ENCODE measurements at regions of chr22 and their contacts with region 1.

Region 1: GRCh38 chr22:23913661-23914353 is 19.6 kb downstream of the MIF start:
- DNase-seq: peak; percentile 98
- ATAC-seq: peak; percentile 98
- H3K4me3 ChIP-seq: peak overlapping the region; percentile 58 to 77 (median 61)
- H3K27ac ChIP-seq: peak overlapping the region; percentile 90
- H3K4me1 ChIP-seq: peaks cover 36% of the 10 kb centered on the region
- H3K27me3 ChIP-seq: no peaks in the 10 kb centered on the region; a peak in 1 of 5 replicates
- CTCF ChIP-seq: no peak; the same call in 1 of the 2 replicates
- EP300 ChIP-seq: no peak; a peak in 1 of 4 replicates
- POLR2A ChIP-seq: peak; percentile 83 to 96
- RAD21 ChIP-seq: no peak

Region 2: GRCh38 chr22:23857606-23858483 is 56.0 kb before region 1 on chr22 and contains the start of gene SLC2A11:
- CTCF ChIA-PET with region 1: no interaction called
- POLR2A ChIA-PET with region 1: interaction called, 20 read pairs
- in situ Hi-C with region 1: no loop called
- intact Hi-C with region 1: no loop called
- DNase-seq: peak; percentile 96
- ATAC-seq: peak; percentile 93
- H3K4me3 ChIP-seq: peak within 1 kb of the TSS; percentile 65 to 89 (median 75)
- H3K27ac ChIP-seq: peak within 1 kb of the TSS; percentile 81
- H3K4me1 ChIP-seq: peaks cover 25% of the 10 kb centered on the region
- H3K27me3 ChIP-seq: no peaks in the 10 kb centered on the region; a peak in 1 of 5 replicates
- CTCF ChIP-seq: peak; percentile 19
- EP300 ChIP-seq: no peak
- POLR2A ChIP-seq: peak; percentile 47 to 93; a peak in 3 of 4 replicates
- RAD21 ChIP-seq: no peak
- total RNA-seq, gene SLC2A11: 8.9 and 15.2 TPM in 2 replicates

Region 3: DNA sequence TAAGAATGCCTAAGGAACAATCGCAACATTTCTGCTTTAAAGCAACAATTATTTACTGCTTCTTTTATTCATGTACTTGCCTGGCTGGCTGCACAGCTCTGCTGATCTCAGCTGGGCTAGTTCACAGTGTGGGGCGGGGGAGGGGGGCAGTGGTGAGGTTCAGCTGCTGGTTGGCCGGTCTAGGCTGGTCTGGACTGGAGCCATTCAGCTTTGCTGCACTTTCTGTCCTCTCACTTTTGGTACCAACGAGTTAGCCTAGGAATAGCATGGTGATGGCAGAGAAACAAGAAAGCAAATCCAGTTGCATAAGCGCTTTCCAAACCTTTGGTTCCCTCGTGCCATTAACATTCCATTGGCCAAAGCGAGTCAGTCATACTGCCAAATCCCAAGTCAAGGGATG is 35.6 kb before region 1 on chr22:
- CTCF ChIA-PET with region 1: no interaction called
- POLR2A ChIA-PET with region 1: no interaction called
- in situ Hi-C with region 1: no loop called
- intact Hi-C with region 1: no loop called
- DNase-seq: no peak
- ATAC-seq: no peak
- H3K4me3 ChIP-seq: no peak overlapping the region
- H3K27ac ChIP-seq: no peak overlapping the region
- H3K4me1 ChIP-seq: peaks cover 7% of the 10 kb centered on the region; the same call in 1 of the 2 replicates
- H3K27me3 ChIP-seq: no peaks in the 10 kb centered on the region
- CTCF ChIP-seq: no peak
- EP300 ChIP-seq: no peak
- POLR2A ChIP-seq: no peak
- RAD21 ChIP-seq: no peak

Region 4: GRCh38 chr22:23888615-23889401 is 25.0 kb before region 1 on chr22:
- CTCF ChIA-PET with region 1: no interaction called
- POLR2A ChIA-PET with region 1: interaction called, 84 read pairs
- in situ Hi-C with region 1: no loop called
- intact Hi-C with region 1: no loop called
- DNase-seq: peak; percentile 52
- ATAC-seq: peak; percentile 48
- H3K4me3 ChIP-seq: no peak overlapping the region
- H3K27ac ChIP-seq: peak overlapping the region; percentile 78
- H3K4me1 ChIP-seq: peaks cover 49% of the 10 kb centered on the region
- H3K27me3 ChIP-seq: no peaks in the 10 kb centered on the region; a peak in 1 of 5 replicates
- CTCF ChIP-seq: peak; percentile 59
- EP300 ChIP-seq: no peak
- POLR2A ChIP-seq: 0 out of 4 replicates have a peak, but pooled peaks of 1 of the 2 experiments have one; percentile 10
- RAD21 ChIP-seq: no peak

Region 5: DNA sequence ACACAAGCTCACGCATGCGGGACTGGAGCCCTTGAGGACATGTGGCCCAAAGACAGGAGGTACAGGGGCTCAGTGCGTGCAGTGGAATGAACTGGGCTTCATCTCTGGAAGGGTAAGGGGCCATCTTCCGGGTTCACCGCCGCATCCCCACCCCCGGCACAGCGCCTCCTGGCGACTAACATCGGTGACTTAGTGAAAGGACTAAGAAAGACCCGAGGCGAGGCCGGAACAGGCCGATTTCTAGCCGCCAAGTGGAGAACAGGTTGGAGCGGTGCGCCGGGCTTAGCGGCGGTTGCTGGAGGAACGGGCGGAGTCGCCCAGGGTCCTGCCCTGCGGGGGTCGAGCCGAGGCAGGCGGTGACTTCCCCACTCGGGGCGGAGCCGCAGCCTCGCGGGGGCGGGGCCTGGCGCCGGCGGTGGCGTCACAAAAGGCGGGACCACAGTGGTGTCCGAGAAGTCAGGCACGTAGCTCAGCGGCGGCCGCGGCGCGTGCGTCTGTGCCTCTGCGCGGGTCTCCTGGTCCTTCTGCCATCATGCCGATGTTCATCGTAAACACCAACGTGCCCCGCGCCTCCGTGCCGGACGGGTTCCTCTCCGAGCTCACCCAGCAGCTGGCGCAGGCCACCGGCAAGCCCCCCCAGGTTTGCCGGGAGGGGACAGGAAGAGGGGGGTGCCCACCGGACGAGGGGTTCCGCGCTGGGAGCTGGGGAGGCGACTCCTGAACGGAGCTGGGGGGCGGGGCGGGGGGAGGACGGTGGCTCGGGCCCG is 19.7 kb before region 1 on chr22 and contains the start of gene MIF:
- CTCF ChIA-PET with region 1: no interaction called
- POLR2A ChIA-PET with region 1: interaction called, 84 read pairs
- in situ Hi-C with region 1: no loop called
- intact Hi-C with region 1: no loop called
- DNase-seq: peak; percentile 89
- ATAC-seq: peak; percentile 82
- H3K4me3 ChIP-seq: peak within 1 kb of the TSS; percentile 78 to 86 (median 85)
- H3K27ac ChIP-seq: peak within 1 kb of the TSS; percentile 96
- H3K4me1 ChIP-seq: peaks cover 54% of the 10 kb centered on the region
- H3K27me3 ChIP-seq: no peaks in the 10 kb centered on the region; a peak in 1 of 5 replicates
- CTCF ChIP-seq: peak; percentile 92
- EP300 ChIP-seq: peak in 1 of 2 experiments; percentile 35; a peak in 1 of 4 replicates
- POLR2A ChIP-seq: peak; percentile 89 to 98
- RAD21 ChIP-seq: peak; percentile 48
- total RNA-seq, gene MIF: 537 and 634 TPM in 2 replicates

Region 6: DNA sequence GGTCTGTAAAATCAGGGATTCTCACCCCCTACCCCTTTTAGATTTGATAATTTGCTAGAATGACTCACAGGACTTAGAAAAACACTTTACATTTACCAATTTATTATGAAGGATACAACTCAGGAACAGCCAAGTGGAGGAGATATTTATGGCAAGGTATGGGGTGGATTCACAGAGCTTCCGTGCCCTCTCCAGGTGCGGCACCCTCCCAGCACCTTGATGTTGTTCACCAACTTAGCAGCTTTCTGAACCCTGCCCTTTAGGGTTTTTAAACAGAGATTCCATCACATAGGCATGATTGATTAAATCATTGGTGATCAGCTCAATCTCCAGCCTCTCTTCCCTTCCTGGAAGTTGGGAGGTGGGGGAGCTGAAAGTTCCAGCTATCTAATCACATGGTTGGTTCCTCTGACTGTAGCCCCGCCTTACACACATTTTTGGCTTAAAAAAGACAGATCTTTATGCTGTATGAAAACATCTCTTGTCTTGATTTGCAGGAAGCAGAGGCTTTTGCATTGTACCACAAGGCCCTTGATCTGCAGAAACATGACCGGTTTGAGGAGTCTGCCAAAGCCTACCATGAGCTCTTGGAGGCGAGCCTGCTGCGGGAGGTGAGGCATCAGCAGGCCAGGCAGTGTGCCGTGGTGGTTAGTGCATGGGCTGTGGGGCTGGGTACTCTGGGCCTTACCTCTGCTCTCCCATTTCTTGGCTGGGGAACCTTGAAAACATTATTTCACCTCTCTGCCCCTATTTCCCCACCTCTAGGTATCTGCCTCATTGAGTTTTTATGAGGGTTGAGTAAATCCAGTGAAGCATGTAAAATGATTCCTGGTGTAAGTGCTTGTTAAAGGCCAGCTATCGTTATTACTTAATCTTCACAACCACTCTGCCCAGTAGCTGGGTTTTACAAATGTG is 124.3 kb after region 1 on chr22:
- CTCF ChIA-PET with region 1: no interaction called
- POLR2A ChIA-PET with region 1: no interaction called
- in situ Hi-C with region 1: no loop called
- intact Hi-C with region 1: no loop called
- DNase-seq: no peak
- ATAC-seq: no peak
- H3K4me3 ChIP-seq: no peak overlapping the region
- H3K27ac ChIP-seq: no peak overlapping the region
- H3K4me1 ChIP-seq: peaks cover 23% of the 10 kb centered on the region
- H3K27me3 ChIP-seq: no peaks in the 10 kb centered on the region
- CTCF ChIP-seq: no peak
- EP300 ChIP-seq: no peak
- POLR2A ChIP-seq: no peak
- RAD21 ChIP-seq: no peak